ENCODE measurements at regions of chr22 and their contacts with region 1.

Region 1: GRCh38 chr22:39319270-39320022 is at the start of gene RPL3:
- DNase-seq: peak; percentile 100
- H3K4me3 ChIP-seq: peak within 1 kb of the TSS; percentile 87 to 100 (median 97)
- H3K27ac ChIP-seq: peak within 1 kb of the TSS; percentile 85 to 96
- H3K4me1 ChIP-seq: peaks cover 14 to 42% (median 35%) of the 10 kb centered on the region in 4 experiments
- H3K27me3 ChIP-seq: no peaks in the 10 kb centered on the region

Region 2: DNA sequence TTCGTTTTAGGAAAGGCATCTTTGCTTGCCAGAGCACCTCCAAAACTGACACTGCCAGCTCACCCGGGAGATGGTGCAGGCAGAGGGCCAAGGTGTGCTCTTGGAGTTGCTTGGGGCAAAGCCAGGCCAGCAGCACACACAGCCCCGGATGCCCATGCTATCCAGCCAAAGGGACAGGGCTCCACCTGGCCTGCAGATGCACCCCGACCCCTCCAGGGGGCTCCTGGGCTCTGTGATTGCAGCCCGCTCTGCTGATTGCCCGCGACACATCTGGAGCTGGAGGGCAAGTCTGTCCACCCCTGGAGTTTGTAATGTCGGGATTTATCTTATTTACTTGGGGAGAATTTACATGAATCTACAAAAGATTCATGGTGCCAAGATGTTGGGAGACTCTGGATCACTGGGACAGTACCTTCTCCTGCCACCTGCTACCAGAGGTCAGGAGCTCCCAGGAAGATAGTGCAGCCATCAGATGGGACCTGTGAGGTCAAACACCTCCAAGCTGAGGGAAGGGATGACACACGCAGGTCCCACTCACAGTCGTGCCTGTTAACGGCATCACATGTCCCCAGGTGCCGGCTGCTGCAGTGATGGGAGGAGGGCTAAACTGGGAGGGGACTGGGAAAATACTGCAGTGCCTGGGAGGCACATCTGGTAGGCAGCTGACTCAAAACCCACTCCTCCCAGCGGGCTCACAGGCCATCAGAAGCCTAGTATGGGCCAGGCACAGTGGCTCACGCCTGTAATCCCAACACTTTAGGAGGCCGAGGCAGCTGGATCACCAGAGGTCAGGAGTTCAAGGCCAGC is 184.2 kb before region 1 on chr22:
- CTCF ChIA-PET with region 1: interaction called, 27 read pairs
- POLR2A ChIA-PET with region 1: interaction called, 3 read pairs
- DNase-seq: peak in 2 of 3 donors; percentile 61 to 68
- H3K4me3 ChIP-seq: no peak overlapping the region
- H3K27ac ChIP-seq: no peak overlapping the region
- H3K4me1 ChIP-seq: peaks cover 0 to 12% (median 0%) of the 10 kb centered on the region in 4 experiments
- H3K27me3 ChIP-seq: peaks cover 0 to 15% (median 0%) of the 10 kb centered on the region in 5 experiments

Region 3: DNA sequence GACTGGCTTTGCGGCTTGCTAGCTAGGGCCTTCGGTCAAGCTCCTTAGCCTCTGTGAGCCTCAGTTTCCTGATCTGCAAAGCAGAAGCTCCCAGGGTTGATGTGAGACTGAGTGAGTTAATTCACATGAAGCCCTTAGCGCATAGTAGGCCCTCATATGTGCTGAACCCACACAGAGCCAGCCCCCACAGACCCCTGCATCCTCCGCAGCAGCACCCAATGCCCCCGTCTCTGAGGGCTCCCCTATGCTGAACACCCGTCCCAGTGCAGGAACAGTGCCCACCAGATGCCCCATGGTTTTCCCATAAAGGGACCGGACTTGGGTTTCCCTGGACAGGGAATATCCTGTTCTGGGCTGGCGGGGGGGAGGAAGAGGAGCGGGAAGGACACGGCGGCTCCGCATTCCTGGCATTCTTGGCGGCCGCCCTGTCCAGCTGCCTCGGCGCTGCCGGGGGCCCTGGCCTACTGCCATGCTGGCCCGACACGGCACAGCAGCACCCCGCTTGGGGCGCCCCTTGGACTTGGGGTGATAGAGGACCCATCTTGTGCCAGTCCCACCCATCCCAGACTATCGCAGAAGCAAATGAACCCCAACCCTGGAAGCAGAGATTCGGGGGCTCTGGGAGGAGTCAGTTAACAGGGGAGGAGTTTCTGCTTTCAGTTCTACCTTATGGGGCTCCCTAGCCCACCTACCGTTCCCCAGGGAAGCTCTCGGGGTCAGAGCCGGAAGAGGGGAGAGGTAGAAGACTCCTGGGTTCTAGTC is 143.3 kb before region 1 on chr22:
- CTCF ChIA-PET with region 1: interaction called, 112 read pairs
- POLR2A ChIA-PET with region 1: interaction called, 4 read pairs
- DNase-seq: no peak
- H3K4me3 ChIP-seq: no peak overlapping the region
- H3K27ac ChIP-seq: no peak overlapping the region
- H3K4me1 ChIP-seq: peaks cover 3 to 34% (median 24%) of the 10 kb centered on the region in 4 experiments
- H3K27me3 ChIP-seq: peaks cover 0 to 6% (median 1%) of the 10 kb centered on the region in 5 experiments

Region 4: GRCh38 chr22:39306581-39307361 is 12.7 kb before region 1 on chr22:
- CTCF ChIA-PET with region 1: interaction called, 18 read pairs
- POLR2A ChIA-PET with region 1: interaction called, 5 read pairs
- DNase-seq: peak; percentile 34 to 59 (median 55)
- H3K4me3 ChIP-seq: no peak overlapping the region
- H3K27ac ChIP-seq: no peak overlapping the region
- H3K4me1 ChIP-seq: peaks cover 0 to 12% (median 6%) of the 10 kb centered on the region in 4 experiments
- H3K27me3 ChIP-seq: peaks cover 0 to 7% (median 2%) of the 10 kb centered on the region in 5 experiments

Region 5: DNA sequence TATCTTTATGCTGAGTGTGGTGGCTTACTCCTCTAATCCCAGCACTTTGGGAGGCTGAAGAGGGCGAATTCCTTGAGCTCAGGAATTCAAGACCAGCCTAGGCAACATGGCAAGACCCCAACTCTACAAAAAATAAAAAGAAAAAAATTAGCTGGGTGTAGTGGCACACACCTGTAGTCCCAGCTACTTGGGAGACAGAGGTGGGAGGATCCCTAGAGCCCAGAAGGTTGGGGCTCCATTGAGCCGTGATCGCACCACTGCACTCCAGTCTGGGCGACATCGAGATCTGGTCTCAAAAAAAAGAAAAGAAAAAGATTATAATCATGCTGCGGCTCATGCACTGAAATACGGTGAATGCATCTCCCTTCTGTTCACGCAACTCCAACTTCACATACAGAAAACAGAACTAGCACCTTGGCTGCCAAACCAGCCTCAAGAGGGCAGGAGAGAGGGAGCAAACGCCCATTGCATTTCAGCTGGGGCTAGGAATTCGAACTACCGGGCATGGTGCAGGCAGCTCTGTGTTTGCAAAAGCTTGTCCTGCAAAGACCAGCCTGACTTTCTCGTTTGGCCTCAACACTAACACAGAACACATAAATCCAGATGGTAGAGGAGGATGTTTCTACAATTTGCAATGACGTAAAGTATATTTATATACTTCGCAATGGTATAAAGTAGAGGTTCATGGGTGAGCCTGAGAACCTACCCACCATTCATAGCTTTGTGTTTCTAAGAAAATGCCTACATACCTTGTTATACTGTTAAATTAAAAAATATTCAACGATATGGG is 24.0 kb after region 1 on chr22:
- CTCF ChIA-PET with region 1: interaction called, 17 read pairs
- POLR2A ChIA-PET with region 1: interaction called, 11 read pairs
- DNase-seq: peak; percentile 67 to 84 (median 79)
- H3K4me3 ChIP-seq: peak overlapping the region in 1 of 7 experiments; percentile 42
- H3K27ac ChIP-seq: no peak overlapping the region
- H3K4me1 ChIP-seq: peaks cover 0 to 9% (median 8%) of the 10 kb centered on the region in 4 experiments
- H3K27me3 ChIP-seq: no peaks in the 10 kb centered on the region

Region 6: GRCh38 chr22:39520054-39520891 is 200.8 kb after region 1 on chr22 and contains the start of gene ATF4:
- CTCF ChIA-PET with region 1: interaction called, 3 read pairs
- POLR2A ChIA-PET with region 1: interaction called, 11 read pairs
- DNase-seq: peak; percentile 99 to 100 (median 100)
- H3K4me3 ChIP-seq: peak within 1 kb of the TSS; percentile 93 to 97 (median 95)
- H3K27ac ChIP-seq: peak within 1 kb of the TSS; percentile 96 to 99
- H3K4me1 ChIP-seq: peaks cover 11 to 54% (median 50%) of the 10 kb centered on the region in 4 experiments
- H3K27me3 ChIP-seq: no peaks in the 10 kb centered on the region

Measured in common myeloid progenitor, CD34-positive (primary cell).